ENCODE measurements at regions of chr12 and their contacts with region 1.

Region 1: DNA sequence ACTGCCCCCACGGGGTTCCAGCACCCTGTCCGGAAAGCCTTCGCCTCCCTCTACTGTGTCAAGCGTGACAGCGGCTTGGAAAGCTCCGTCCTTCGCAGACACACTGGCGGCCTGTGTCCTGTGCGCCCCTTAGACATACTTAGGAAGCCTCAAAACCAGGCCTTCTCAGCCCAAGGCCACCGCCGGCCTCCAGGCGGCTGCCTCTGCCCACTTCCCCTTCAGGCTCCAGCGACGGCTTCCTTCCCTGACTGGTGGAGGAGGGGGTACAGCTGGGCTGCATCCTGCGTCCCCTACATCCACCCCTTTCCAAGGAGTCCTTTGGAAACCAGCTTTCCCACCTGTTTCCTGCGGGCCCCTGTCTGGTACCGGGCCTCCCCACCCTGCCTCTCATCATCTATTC is 2.5 kb upstream of the CACNA2D4 start:
- DNase-seq: peak; percentile 78
- ATAC-seq: peak; percentile 41 to 51
- H3K4me3 ChIP-seq: no peak overlapping the region
- H3K27ac ChIP-seq: no peak overlapping the region
- H3K4me1 ChIP-seq: peaks cover 4% of the 10 kb centered on the region
- H3K27me3 ChIP-seq: peaks cover 10% of the 10 kb centered on the region
- CTCF ChIP-seq: no peak

Region 2: DNA sequence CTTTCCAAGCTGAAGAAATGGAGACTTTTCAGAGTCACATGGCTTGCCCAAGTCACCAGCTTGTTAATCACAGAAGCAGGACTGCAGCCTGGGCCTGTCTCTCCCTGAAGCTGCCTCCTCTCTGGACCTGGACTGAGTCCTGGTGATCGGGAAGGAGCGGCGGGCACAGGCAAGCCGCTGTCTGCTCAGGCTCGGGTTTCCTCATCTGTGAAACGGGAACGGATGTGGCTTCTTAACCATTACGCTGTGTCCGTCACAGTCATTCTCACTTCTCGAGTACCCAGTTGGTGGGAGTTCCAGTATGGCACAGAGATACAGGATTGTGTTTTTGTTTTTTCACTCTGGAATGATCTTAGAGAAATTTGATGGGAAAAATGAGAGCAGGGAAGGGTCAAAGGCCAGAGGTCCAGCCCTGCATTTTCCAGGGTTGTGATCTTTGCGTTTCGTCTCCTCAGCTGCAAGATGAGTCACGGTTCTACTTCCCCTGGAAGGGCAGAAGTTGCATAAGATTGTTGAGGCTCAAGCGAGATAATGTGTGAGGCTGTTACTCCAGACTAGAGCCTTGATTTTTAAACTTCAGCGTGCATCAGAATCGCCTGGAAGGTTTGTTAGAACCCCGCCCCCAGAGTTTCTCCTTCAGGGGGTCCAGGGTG is 108.2 kb before region 1 on chr12:
- intact Hi-C with region 1: loop called (anchors 10 kb)
- DNase-seq: peak; percentile 76
- ATAC-seq: peak; percentile 72 to 76
- H3K4me3 ChIP-seq: no peak overlapping the region
- H3K27ac ChIP-seq: peak overlapping the region; percentile 74
- H3K4me1 ChIP-seq: peaks cover 6% of the 10 kb centered on the region
- H3K27me3 ChIP-seq: peaks cover 6% of the 10 kb centered on the region
- CTCF ChIP-seq: no peak